Mammary epithelial cell (primary cell): ENCODE measurements at regions of chr9 and their contacts with region 1.

Region 1: GRCh38 chr9:24932785-24933184 is 387.1 kb upstream of the IZUMO3 start:
- DNase-seq: no peak
- H3K4me3 ChIP-seq: no peak overlapping the region
- H3K27ac ChIP-seq: no peak overlapping the region
- H3K4me1 ChIP-seq: no peaks in the 10 kb centered on the region
- H3K27me3 ChIP-seq: no peaks in the 10 kb centered on the region
- CTCF ChIP-seq: no peak

Region 2: GRCh38 chr9:24846248-24846912 is 86.4 kb before region 1 on chr9:
- CTCF ChIA-PET with region 1: interaction called, 6 read pairs
- dilution Hi-C with region 1: loop called (anchors 5 kb)
- in situ Hi-C with region 1: no loop called
- intact Hi-C with region 1: no loop called
- DNase-seq: no peak
- H3K4me3 ChIP-seq: no peak overlapping the region
- H3K27ac ChIP-seq: no peak overlapping the region
- H3K4me1 ChIP-seq: no peaks in the 10 kb centered on the region
- H3K27me3 ChIP-seq: no peaks in the 10 kb centered on the region
- CTCF ChIP-seq: no peak

Region 3: GRCh38 chr9:25010027-25010662 is 77.4 kb after region 1 on chr9:
- CTCF ChIA-PET with region 1: no interaction called
- dilution Hi-C with region 1: no loop called
- in situ Hi-C with region 1: no loop called
- intact Hi-C with region 1: no loop called
- DNase-seq: no peak
- H3K4me3 ChIP-seq: no peak overlapping the region
- H3K27ac ChIP-seq: no peak overlapping the region
- H3K4me1 ChIP-seq: no peaks in the 10 kb centered on the region
- H3K27me3 ChIP-seq: no peaks in the 10 kb centered on the region
- CTCF ChIP-seq: no peak

Region 4: DNA sequence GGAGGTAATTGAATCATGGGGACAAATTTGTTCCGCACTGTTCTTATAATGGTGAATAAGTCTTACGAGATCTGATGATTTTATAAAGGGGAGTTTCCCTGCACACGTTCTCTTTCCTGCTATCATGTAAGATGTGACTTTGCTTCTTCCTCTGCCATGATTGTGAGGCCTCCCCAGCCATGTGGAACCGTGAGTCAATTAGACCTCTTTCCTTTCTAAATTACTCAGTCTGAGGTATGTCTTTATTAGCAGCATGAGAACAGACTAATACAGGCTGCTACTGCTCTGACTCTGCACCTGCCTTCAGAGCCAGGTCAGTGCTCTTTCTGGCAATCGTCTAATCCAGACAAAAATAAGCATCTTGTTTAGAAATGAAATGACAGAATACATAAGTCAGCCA is 1224.6 kb after region 1 on chr9:
- CTCF ChIA-PET with region 1: no interaction called
- dilution Hi-C with region 1: no loop called
- in situ Hi-C with region 1: no loop called
- intact Hi-C with region 1: no loop called
- DNase-seq: no peak
- H3K4me3 ChIP-seq: no peak overlapping the region
- H3K27ac ChIP-seq: no peak overlapping the region
- H3K4me1 ChIP-seq: no peaks in the 10 kb centered on the region
- H3K27me3 ChIP-seq: no peaks in the 10 kb centered on the region
- CTCF ChIP-seq: no peak